ENCODE measurements at regions of chr5 and their contacts with region 1.

Region 1: GRCh38 chr5:76715736-76716455 is at the start of gene F2R:
- DNase-seq: peak in 7 of 9 experiments; percentile 45 to 83 (median 66)
- ATAC-seq: peak; percentile 80
- H3K4me3 ChIP-seq: peak within 1 kb of the TSS; percentile 80 to 91
- H3K4me3 Mint-ChIP-seq: peak within 1 kb of the TSS; percentile 85
- H3K27ac ChIP-seq: peak within 1 kb of the TSS; percentile 44 to 50
- H3K27ac Mint-ChIP-seq: peak within 1 kb of the TSS; percentile 76
- H3K4me1 ChIP-seq: peaks cover 18% of the 10 kb centered on the region
- H3K4me1 Mint-ChIP-seq: peaks cover 28% of the 10 kb centered on the region
- H3K27me3 ChIP-seq: peaks cover 0 to 9% of the 10 kb centered on the region in 2 experiments
- H3K27me3 Mint-ChIP-seq: peaks cover 31% of the 10 kb centered on the region
- CTCF ChIP-seq: peak; percentile 55
- total RNA-seq, gene F2R: 10.7 to 12.7 TPM

Region 2: DNA sequence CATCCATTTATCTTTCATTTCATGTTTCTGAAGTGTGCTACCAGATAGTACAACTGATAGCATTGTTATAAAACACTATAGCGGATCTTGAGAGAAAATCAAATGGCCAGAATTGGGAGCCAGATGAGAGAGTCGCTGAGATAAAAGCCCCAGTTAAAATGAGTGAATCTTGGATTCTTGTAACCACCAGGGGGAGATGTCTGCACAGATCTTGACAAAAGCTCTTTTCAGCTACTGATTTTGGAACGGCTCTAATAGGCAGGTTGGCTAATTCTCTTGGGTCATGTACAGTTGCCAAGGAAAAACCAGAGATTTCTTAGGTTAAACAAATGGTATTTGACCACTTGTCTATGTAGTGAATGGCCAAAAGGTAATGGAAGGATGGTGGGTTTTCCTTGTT is 114.4 kb before region 1 on chr5:
- CTCF ChIA-PET with region 1: no interaction called
- POLR2A ChIA-PET with region 1: no interaction called
- intact Hi-C with region 1: loop called in 1 of 2 experiments (anchors 2 kb)
- DNase-seq: peak in 4 of 9 experiments; percentile 14 to 74 (median 42)
- ATAC-seq: peak; percentile 69
- H3K4me3 ChIP-seq: no peak overlapping the region
- H3K4me3 Mint-ChIP-seq: no peak overlapping the region
- H3K27ac ChIP-seq: no peak overlapping the region
- H3K27ac Mint-ChIP-seq: no peak overlapping the region
- H3K4me1 ChIP-seq: no peaks in the 10 kb centered on the region
- H3K4me1 Mint-ChIP-seq: no peaks in the 10 kb centered on the region
- H3K27me3 ChIP-seq: no peaks in the 10 kb centered on the region
- H3K27me3 Mint-ChIP-seq: no peaks in the 10 kb centered on the region
- CTCF ChIP-seq: peak; percentile 69

Region 3: GRCh38 chr5:76733049-76733417 is 17.1 kb after region 1 on chr5:
- CTCF ChIA-PET with region 1: interaction called, 4 read pairs
- POLR2A ChIA-PET with region 1: interaction called, 5 read pairs
- intact Hi-C with region 1: loop called (anchors 2 kb)
- DNase-seq: peak in 6 of 9 experiments; percentile 42 to 94 (median 75)
- ATAC-seq: peak; percentile 81
- H3K4me3 ChIP-seq: peak overlapping the region in 1 of 2 experiments; percentile 27
- H3K4me3 Mint-ChIP-seq: peak overlapping the region; percentile 68
- H3K27ac ChIP-seq: peak overlapping the region; percentile 65 to 82
- H3K27ac Mint-ChIP-seq: peak overlapping the region; percentile 92
- H3K4me1 ChIP-seq: peaks cover 14% of the 10 kb centered on the region
- H3K4me1 Mint-ChIP-seq: peaks cover 37% of the 10 kb centered on the region
- H3K27me3 ChIP-seq: no peaks in the 10 kb centered on the region
- H3K27me3 Mint-ChIP-seq: no peaks in the 10 kb centered on the region
- CTCF ChIP-seq: no peak

Region 4: DNA sequence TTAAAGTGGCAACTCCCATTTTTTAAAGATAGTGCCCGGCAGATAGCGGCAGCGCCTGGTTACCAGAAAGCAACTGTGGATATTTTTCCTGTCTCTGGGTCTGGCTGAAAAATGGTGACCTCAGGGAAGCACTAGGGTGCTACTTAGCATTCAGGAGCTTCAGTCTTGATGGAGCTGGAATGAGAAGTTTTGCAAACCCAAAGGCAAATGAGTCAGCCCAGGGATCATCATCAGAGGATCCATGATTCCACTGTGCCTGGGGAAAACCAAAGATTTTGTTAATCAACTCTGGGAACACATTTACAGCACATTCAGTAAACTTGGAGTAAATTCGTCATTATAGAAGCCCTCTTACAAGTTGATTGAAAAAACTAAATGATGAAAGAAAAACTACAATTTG is 26.7 kb after region 1 on chr5:
- CTCF ChIA-PET with region 1: interaction called, 5 read pairs
- POLR2A ChIA-PET with region 1: interaction called, 6 read pairs
- intact Hi-C with region 1: loop called (anchors 2 to 5 kb)
- DNase-seq: no peak
- ATAC-seq: no peak
- H3K4me3 ChIP-seq: no peak overlapping the region
- H3K4me3 Mint-ChIP-seq: no peak overlapping the region
- H3K27ac ChIP-seq: peak overlapping the region in 1 of 2 experiments; percentile 50
- H3K27ac Mint-ChIP-seq: no peak overlapping the region
- H3K4me1 ChIP-seq: peaks cover 21% of the 10 kb centered on the region
- H3K4me1 Mint-ChIP-seq: peaks cover 26% of the 10 kb centered on the region
- H3K27me3 ChIP-seq: no peaks in the 10 kb centered on the region
- H3K27me3 Mint-ChIP-seq: no peaks in the 10 kb centered on the region
- CTCF ChIP-seq: no peak